Body of pancreas (tissue), 4 donors: ENCODE measurements at regions of chr2 and their contacts with region 1.

Region 1: GRCh38 chr2:222707689-222708525 is 36.4 kb downstream of the MOGAT1 start:
- DNase-seq: peak; percentile 79 to 86 (median 81)
- ATAC-seq: peak; percentile 75
- H3K4me3 ChIP-seq: no peak overlapping the region
- H3K27ac ChIP-seq: no peak overlapping the region
- H3K4me1 ChIP-seq: peaks cover 5% of the 10 kb centered on the region
- H3K27me3 ChIP-seq: no peaks in the 10 kb centered on the region
- CTCF ChIP-seq: peak; percentile 81 to 99 (median 92)
- POLR2A ChIP-seq: no peak

Region 2: GRCh38 chr2:222760301-222760897 is 52.5 kb after region 1 on chr2:
- intact Hi-C with region 1: no loop called
- DNase-seq: no peak
- ATAC-seq: no peak
- H3K4me3 ChIP-seq: no peak overlapping the region
- H3K27ac ChIP-seq: no peak overlapping the region
- H3K4me1 ChIP-seq: peaks cover 7% of the 10 kb centered on the region
- H3K27me3 ChIP-seq: no peaks in the 10 kb centered on the region
- CTCF ChIP-seq: no peak
- POLR2A ChIP-seq: no peak

Region 3: GRCh38 chr2:222904557-222905258 is 196.8 kb after region 1 on chr2:
- intact Hi-C with region 1: loop called (anchors 5 kb)
- DNase-seq: no peak
- ATAC-seq: no peak
- H3K4me3 ChIP-seq: no peak overlapping the region
- H3K27ac ChIP-seq: no peak overlapping the region
- H3K4me1 ChIP-seq: peaks cover 14% of the 10 kb centered on the region
- H3K27me3 ChIP-seq: no peaks in the 10 kb centered on the region
- CTCF ChIP-seq: no peak
- POLR2A ChIP-seq: no peak